ENCODE measurements at regions of chr12 and their contacts with region 1.

Region 1: GRCh38 chr12:3202734-3203446 is 125.7 kb downstream of the TSPAN9 start:
- DNase-seq: no peak
- ATAC-seq: peak; percentile 82
- H3K4me3 ChIP-seq: no peak overlapping the region
- H3K27ac ChIP-seq: no peak overlapping the region
- H3K4me1 ChIP-seq: no peaks in the 10 kb centered on the region
- H3K27me3 ChIP-seq: peaks cover 11 to 13% of the 10 kb centered on the region in 2 experiments
- CTCF ChIP-seq: peak; percentile 82 to 91 (median 82)
- EP300 ChIP-seq: no peak
- POLR2A ChIP-seq: no peak
- RAD21 ChIP-seq: peak; percentile 58

Region 2: GRCh38 chr12:2988494-2988893 is 214.4 kb before region 1 on chr12:
- CTCF ChIA-PET with region 1: no interaction called
- POLR2A ChIA-PET with region 1: no interaction called
- RAD21 ChIA-PET with region 1: no interaction called
- SMC1A ChIA-PET with region 1: no interaction called
- in situ Hi-C with region 1: no loop called
- intact Hi-C with region 1: no loop called
- DNase-seq: no peak
- ATAC-seq: no peak
- H3K4me3 ChIP-seq: no peak overlapping the region
- H3K27ac ChIP-seq: no peak overlapping the region
- H3K4me1 ChIP-seq: no peaks in the 10 kb centered on the region
- H3K27me3 ChIP-seq: no peaks in the 10 kb centered on the region
- CTCF ChIP-seq: no peak
- EP300 ChIP-seq: no peak
- POLR2A ChIP-seq: no peak
- RAD21 ChIP-seq: no peak

Region 3: GRCh38 chr12:3030821-3031429 is 172.0 kb before region 1 on chr12:
- CTCF ChIA-PET with region 1: no interaction called
- POLR2A ChIA-PET with region 1: no interaction called
- RAD21 ChIA-PET with region 1: no interaction called
- SMC1A ChIA-PET with region 1: no interaction called
- in situ Hi-C with region 1: no loop called
- intact Hi-C with region 1: no loop called
- DNase-seq: no peak
- ATAC-seq: no peak
- H3K4me3 ChIP-seq: no peak overlapping the region
- H3K27ac ChIP-seq: no peak overlapping the region
- H3K4me1 ChIP-seq: no peaks in the 10 kb centered on the region
- H3K27me3 ChIP-seq: no peaks in the 10 kb centered on the region
- CTCF ChIP-seq: no peak
- EP300 ChIP-seq: no peak
- POLR2A ChIP-seq: no peak
- RAD21 ChIP-seq: no peak

Region 4: GRCh38 chr12:3073438-3074250 is 129.2 kb before region 1 on chr12:
- CTCF ChIA-PET with region 1: interaction called, 7 read pairs
- POLR2A ChIA-PET with region 1: no interaction called
- RAD21 ChIA-PET with region 1: no interaction called
- SMC1A ChIA-PET with region 1: interaction called, 3 read pairs
- in situ Hi-C with region 1: no loop called
- intact Hi-C with region 1: loop called (anchors 2 kb)
- DNase-seq: peak; percentile 37
- ATAC-seq: peak; percentile 87
- H3K4me3 ChIP-seq: no peak overlapping the region
- H3K27ac ChIP-seq: no peak overlapping the region
- H3K4me1 ChIP-seq: no peaks in the 10 kb centered on the region; the same call in 1 of the 2 replicates
- H3K27me3 ChIP-seq: peaks cover 0 to 6% of the 10 kb centered on the region in 2 experiments; a peak in 3 of 4 replicates
- CTCF ChIP-seq: peak; percentile 90 to 100 (median 97)
- EP300 ChIP-seq: no peak
- POLR2A ChIP-seq: no peak
- RAD21 ChIP-seq: peak; percentile 71

Region 5: GRCh38 chr12:3135522-3136461 is 67.1 kb before region 1 on chr12:
- CTCF ChIA-PET with region 1: interaction called, 5 read pairs
- POLR2A ChIA-PET with region 1: no interaction called
- RAD21 ChIA-PET with region 1: no interaction called
- SMC1A ChIA-PET with region 1: no interaction called
- in situ Hi-C with region 1: loop called (anchors 5 kb)
- intact Hi-C with region 1: loop called (anchors 1 kb)
- DNase-seq: peak; percentile 20
- ATAC-seq: peak; percentile 94
- H3K4me3 ChIP-seq: no peak overlapping the region
- H3K27ac ChIP-seq: no peak overlapping the region
- H3K4me1 ChIP-seq: no peaks in the 10 kb centered on the region
- H3K27me3 ChIP-seq: peaks cover 2 to 8% of the 10 kb centered on the region in 2 experiments; a peak in 3 of 4 replicates
- CTCF ChIP-seq: peak; percentile 71 to 82 (median 72)
- EP300 ChIP-seq: no peak
- POLR2A ChIP-seq: no peak
- RAD21 ChIP-seq: peak; percentile 81

Region 6: DNA sequence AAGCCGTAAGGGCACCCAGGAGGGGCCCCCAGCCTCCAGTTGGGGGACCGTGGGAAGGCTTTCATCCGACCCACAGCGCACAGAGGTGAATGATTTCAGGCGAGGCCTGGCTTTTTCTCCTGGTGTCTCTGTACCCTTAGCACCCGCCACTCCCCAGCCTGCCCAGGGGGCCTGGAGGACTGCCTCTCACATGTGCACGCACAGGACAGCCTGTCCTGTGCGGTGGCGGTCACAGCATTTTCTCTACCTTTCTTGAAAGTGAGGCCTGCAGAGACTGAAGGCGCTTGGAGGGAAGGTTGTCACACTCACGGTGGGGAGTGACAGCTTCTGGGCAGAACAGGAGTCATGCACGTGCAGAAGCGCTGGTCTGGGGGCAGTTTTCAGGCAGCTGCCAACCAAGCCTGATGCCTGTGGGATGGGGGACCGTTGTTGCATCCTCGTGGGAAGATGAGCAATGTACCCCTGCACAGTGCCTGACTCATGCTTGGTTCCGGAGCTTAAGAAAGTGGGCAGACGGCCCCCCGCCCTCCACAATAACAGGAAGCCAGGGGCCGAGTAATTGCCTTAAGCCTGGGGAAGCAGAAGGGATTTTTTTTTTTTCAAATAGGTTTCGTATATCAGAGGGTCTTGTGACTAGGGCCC is 22.4 kb after region 1 on chr12:
- CTCF ChIA-PET with region 1: no interaction called
- POLR2A ChIA-PET with region 1: no interaction called
- RAD21 ChIA-PET with region 1: no interaction called
- SMC1A ChIA-PET with region 1: no interaction called
- in situ Hi-C with region 1: no loop called
- intact Hi-C with region 1: no loop called
- DNase-seq: no peak
- ATAC-seq: no peak
- H3K4me3 ChIP-seq: no peak overlapping the region
- H3K27ac ChIP-seq: no peak overlapping the region
- H3K4me1 ChIP-seq: no peaks in the 10 kb centered on the region
- H3K27me3 ChIP-seq: peaks cover 0 to 5% of the 10 kb centered on the region in 2 experiments; a peak in 2 of 4 replicates
- CTCF ChIP-seq: no peak
- EP300 ChIP-seq: no peak
- POLR2A ChIP-seq: no peak
- RAD21 ChIP-seq: no peak

Region 7: DNA sequence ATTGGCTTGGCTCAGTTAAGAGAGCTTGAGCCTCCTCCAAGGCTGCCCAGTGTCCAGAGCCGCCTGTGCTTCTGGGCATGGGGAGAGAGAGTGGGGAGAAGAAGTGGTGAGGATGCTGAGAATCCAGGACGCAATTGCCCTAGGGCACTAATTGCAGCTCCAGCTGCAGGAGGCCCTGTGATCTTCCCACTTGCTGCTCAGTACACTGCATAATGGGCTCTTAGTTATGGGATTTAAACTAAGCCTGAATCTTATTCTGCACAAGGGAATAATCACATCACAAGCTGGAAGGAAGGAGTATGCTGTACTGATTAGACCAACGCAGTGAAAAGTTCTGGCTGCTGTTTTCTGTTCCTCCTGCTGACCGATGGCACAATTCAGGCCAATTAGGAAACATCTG is 187.1 kb after region 1 on chr12:
- CTCF ChIA-PET with region 1: no interaction called
- POLR2A ChIA-PET with region 1: no interaction called
- RAD21 ChIA-PET with region 1: no interaction called
- SMC1A ChIA-PET with region 1: no interaction called
- in situ Hi-C with region 1: no loop called
- intact Hi-C with region 1: no loop called
- DNase-seq: no peak
- ATAC-seq: no peak
- H3K4me3 ChIP-seq: no peak overlapping the region
- H3K27ac ChIP-seq: no peak overlapping the region
- H3K4me1 ChIP-seq: no peaks in the 10 kb centered on the region
- H3K27me3 ChIP-seq: no peaks in the 10 kb centered on the region
- CTCF ChIP-seq: no peak
- EP300 ChIP-seq: no peak
- POLR2A ChIP-seq: no peak
- RAD21 ChIP-seq: no peak